ENCODE measurements at regions of chr4 and their contacts with region 1.

Region 1: DNA sequence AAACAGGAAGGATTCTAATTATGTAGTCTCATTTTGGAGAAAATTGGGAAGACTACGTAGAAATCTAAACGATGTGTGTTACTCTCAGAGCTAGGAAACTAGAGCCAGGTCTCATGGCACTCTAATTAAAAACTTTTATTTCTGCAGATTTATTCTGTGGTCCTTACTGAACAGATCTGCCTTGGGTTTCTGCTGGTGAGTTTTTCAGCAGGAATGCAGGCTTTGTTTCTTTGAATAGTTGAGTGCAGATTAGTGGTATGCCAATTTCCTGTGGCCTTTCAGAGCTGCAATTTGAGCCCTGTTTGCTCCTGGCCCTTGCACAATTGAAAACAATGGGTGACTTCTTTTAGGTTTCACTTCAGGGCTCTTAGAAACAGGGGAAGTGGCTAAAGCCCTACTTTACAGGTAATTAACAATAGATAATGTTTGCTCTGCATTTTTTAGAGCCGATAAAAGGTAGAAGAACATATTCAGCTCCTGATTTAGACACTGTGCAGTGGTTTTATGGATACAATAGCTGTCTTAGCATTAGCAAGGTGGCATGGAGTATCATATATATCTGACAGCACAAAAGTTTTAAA is 21.8 kb downstream of the SPRY1 start:
- DNase-seq: peak; percentile 70 to 99
- H3K4me3 ChIP-seq: peak overlapping the region; percentile 16; the same call in 1 of the 2 replicates
- H3K27ac ChIP-seq: peak overlapping the region; percentile 90
- H3K4me1 ChIP-seq: peaks cover 71% of the 10 kb centered on the region
- H3K27me3 ChIP-seq: no peaks in the 10 kb centered on the region
- CTCF ChIP-seq: no peak

Region 2: GRCh38 chr4:123405267-123405865 is 13.1 kb before region 1 on chr4:
- CTCF ChIA-PET with region 1: no interaction called
- POLR2A ChIA-PET with region 1: no interaction called
- intact Hi-C with region 1: no loop called
- DNase-seq: no peak
- H3K4me3 ChIP-seq: no peak overlapping the region
- H3K27ac ChIP-seq: no peak overlapping the region
- H3K4me1 ChIP-seq: peaks cover 41% of the 10 kb centered on the region
- H3K27me3 ChIP-seq: no peaks in the 10 kb centered on the region
- CTCF ChIP-seq: no peak

Region 3: DNA sequence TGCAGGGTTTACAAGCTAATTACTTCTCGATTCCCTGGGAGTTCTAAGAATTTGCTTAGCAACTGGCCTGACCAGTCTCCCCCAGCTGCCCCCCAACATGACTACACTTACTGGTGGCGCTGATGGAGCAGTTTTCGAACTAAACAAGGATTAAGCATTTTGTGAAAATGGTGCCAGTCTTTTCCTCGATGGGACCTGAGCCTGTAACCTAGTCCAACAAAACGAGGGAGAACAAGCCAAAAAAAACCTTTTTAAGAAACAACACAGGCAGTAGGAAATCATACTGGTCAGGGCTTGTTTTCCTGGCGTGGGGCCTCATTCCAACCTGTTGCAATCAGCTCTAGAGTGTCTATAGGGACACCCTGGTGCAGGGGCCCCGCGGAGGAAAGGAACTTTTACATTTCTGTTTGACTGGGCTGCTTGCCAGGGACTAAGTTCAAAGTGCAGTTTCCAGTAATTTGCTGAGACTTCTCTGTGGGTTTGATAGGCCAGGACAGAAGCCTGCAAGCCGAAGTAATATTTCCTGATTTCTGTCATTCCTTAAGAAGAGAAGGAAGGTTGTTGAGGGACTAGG is 136.9 kb after region 1 on chr4:
- CTCF ChIA-PET with region 1: no interaction called
- POLR2A ChIA-PET with region 1: no interaction called
- intact Hi-C with region 1: loop called (anchors 2 kb)
- DNase-seq: peak; percentile 86 to 90
- H3K4me3 ChIP-seq: no peak overlapping the region
- H3K27ac ChIP-seq: peak overlapping the region; percentile 67
- H3K4me1 ChIP-seq: peaks cover 38% of the 10 kb centered on the region
- H3K27me3 ChIP-seq: no peaks in the 10 kb centered on the region
- CTCF ChIP-seq: no peak

Region 4: DNA sequence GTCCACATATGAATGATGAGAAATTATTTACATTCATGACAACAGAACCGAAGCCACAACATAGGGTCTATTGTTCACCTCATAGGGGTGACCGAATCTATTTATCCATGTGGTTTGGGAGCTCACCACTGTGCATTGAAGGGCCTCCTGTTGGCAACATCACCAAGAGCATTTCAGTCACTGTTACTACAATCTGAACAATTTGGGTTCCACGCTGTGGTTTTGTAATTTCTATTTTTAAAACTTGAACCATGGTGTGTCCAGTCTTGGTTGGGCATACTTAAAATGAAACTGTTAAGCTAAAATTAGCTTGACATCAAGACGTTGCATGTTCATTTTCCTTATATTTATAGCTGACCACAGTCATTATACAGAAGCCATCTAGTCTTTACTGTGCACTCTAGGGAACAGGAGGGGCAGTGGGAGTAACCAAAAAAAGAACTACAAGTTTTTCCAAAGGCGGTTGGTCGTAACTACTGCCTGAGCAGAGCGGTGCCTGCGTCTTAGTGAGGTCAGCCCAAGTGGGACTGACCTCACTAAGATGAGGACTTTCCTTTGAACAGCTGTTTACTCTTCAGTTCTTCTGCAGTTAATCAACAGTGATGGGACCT is 170.3 kb after region 1 on chr4:
- CTCF ChIA-PET with region 1: no interaction called
- POLR2A ChIA-PET with region 1: no interaction called
- intact Hi-C with region 1: loop called (anchors 1 kb)
- DNase-seq: no peak
- H3K4me3 ChIP-seq: no peak overlapping the region
- H3K27ac ChIP-seq: peak overlapping the region; percentile 67
- H3K4me1 ChIP-seq: peaks cover 28% of the 10 kb centered on the region
- H3K27me3 ChIP-seq: no peaks in the 10 kb centered on the region
- CTCF ChIP-seq: no peak

Region 5: DNA sequence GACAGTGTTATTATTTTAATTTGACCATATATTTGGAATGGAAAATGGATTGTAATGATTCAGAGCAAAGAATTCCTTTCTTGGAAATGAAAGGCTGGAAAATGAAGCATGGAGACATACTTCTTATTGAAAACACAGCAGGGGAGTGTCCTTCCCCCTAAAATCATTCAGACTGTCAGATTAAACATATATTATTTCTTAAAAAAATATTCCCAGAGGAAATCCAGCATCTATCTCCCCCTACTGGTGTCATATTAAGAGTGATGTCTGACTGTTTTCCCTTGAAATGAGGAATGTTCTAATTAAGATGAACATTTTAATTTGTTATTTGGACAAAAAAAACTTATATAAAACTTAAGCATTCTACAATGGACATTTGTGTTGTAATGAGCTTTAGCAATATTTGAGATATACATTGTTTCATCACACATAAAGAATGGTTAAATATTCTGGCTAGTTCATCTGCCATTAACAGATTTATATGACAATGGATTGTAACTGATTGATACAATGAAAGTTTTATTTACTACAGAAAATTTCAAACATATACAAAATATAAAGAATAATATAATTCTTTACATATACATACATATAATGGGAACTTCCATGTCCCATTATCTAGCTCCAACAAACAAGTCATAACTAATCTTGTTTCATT is 242.8 kb after region 1 on chr4:
- CTCF ChIA-PET with region 1: no interaction called
- POLR2A ChIA-PET with region 1: no interaction called
- intact Hi-C with region 1: no loop called
- DNase-seq: no peak
- H3K4me3 ChIP-seq: no peak overlapping the region
- H3K27ac ChIP-seq: no peak overlapping the region
- H3K4me1 ChIP-seq: no peaks in the 10 kb centered on the region
- H3K27me3 ChIP-seq: no peaks in the 10 kb centered on the region
- CTCF ChIP-seq: peak; percentile 89

Region 6: GRCh38 chr4:124212815-124213630 is 794.6 kb after region 1 on chr4:
- CTCF ChIA-PET with region 1: no interaction called
- POLR2A ChIA-PET with region 1: no interaction called
- intact Hi-C with region 1: no loop called
- DNase-seq: no peak
- H3K4me3 ChIP-seq: no peak overlapping the region
- H3K27ac ChIP-seq: no peak overlapping the region
- H3K4me1 ChIP-seq: no peaks in the 10 kb centered on the region
- H3K27me3 ChIP-seq: no peaks in the 10 kb centered on the region
- CTCF ChIP-seq: no peak

Measured in PC-9 (cell line).